CD8-positive, alpha-beta T cell (primary cell): ENCODE measurements at regions of chr15 and their contacts with region 1.

Region 1: DNA sequence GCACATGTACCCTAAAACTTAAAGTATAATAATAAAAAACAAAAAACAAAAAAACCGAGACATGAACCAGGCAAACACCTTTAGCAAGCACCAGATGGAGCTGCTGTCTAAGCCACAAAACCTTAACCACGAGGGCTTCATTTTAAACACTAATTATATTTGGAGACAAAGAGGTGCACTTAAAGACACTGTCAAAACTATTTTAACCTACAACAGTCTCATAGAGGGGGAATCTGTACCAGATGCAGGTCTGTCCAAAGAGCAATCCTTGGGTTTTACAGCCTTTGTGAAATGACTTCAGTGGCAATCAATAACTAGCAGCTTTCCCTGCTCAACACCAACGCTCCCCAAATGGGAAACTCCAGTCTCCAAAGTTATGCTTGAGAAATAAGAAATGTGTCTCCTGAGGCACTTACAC is 115.7 kb upstream of the TSPAN3 start:
- DNase-seq: peak in 3 of 9 experiments; percentile 26 to 63 (median 46)
- ATAC-seq: no peak
- H3K4me3 ChIP-seq: no peak overlapping the region
- H3K4me3 Mint-ChIP-seq: no peak overlapping the region
- H3K27ac ChIP-seq: no peak overlapping the region
- H3K27ac Mint-ChIP-seq: no peak overlapping the region
- H3K4me1 ChIP-seq: peaks cover 18% of the 10 kb centered on the region
- H3K4me1 Mint-ChIP-seq: peaks cover 41% of the 10 kb centered on the region
- H3K27me3 ChIP-seq: no peaks in the 10 kb centered on the region
- H3K27me3 Mint-ChIP-seq: no peaks in the 10 kb centered on the region
- CTCF ChIP-seq: peak; percentile 60

Region 2: GRCh38 chr15:77870195-77871065 is 683.8 kb after region 1 on chr15:
- CTCF ChIA-PET with region 1: no interaction called
- POLR2A ChIA-PET with region 1: no interaction called
- intact Hi-C with region 1: loop called in 1 of 2 experiments (anchors 10 kb)
- DNase-seq: peak in 4 of 9 experiments; percentile 25 to 44 (median 32)
- ATAC-seq: no peak
- H3K4me3 ChIP-seq: no peak overlapping the region
- H3K4me3 Mint-ChIP-seq: no peak overlapping the region
- H3K27ac ChIP-seq: no peak overlapping the region
- H3K27ac Mint-ChIP-seq: no peak overlapping the region
- H3K4me1 ChIP-seq: no peaks in the 10 kb centered on the region
- H3K4me1 Mint-ChIP-seq: no peaks in the 10 kb centered on the region
- H3K27me3 ChIP-seq: no peaks in the 10 kb centered on the region
- H3K27me3 Mint-ChIP-seq: no peaks in the 10 kb centered on the region
- CTCF ChIP-seq: peak; percentile 67